Transverse colon (tissue), 4 donors: ENCODE measurements at regions of chr9 and their contacts with region 1.

Region 1: GRCh38 chr9:79507801-79508200 is 64.0 kb upstream of the TLE4 start:
- DNase-seq: no peak
- H3K4me3 ChIP-seq: no peak overlapping the region
- H3K27ac ChIP-seq: no peak overlapping the region
- H3K4me1 ChIP-seq: no peaks in the 10 kb centered on the region
- H3K27me3 ChIP-seq: no peaks in the 10 kb centered on the region
- CTCF ChIP-seq: no peak
- EP300 ChIP-seq: no peak
- POLR2A ChIP-seq: no peak

Region 2: GRCh38 chr9:79264511-79265355 is 243.1 kb before region 1 on chr9:
- in situ Hi-C with region 1: no loop called
- intact Hi-C with region 1: loop called (anchors 5 kb)
- DNase-seq: no peak
- H3K4me3 ChIP-seq: no peak overlapping the region
- H3K27ac ChIP-seq: no peak overlapping the region
- H3K4me1 ChIP-seq: no peaks in the 10 kb centered on the region
- H3K27me3 ChIP-seq: no peaks in the 10 kb centered on the region
- CTCF ChIP-seq: no peak
- EP300 ChIP-seq: no peak
- POLR2A ChIP-seq: no peak

Region 3: GRCh38 chr9:80012557-80013330 is 504.9 kb after region 1 on chr9:
- in situ Hi-C with region 1: no loop called
- intact Hi-C with region 1: no loop called
- DNase-seq: no peak
- H3K4me3 ChIP-seq: no peak overlapping the region
- H3K27ac ChIP-seq: no peak overlapping the region
- H3K4me1 ChIP-seq: no peaks in the 10 kb centered on the region
- H3K27me3 ChIP-seq: no peaks in the 10 kb centered on the region
- CTCF ChIP-seq: no peak
- EP300 ChIP-seq: no peak
- POLR2A ChIP-seq: no peak

Region 4: GRCh38 chr9:80435591-80435990 is 927.8 kb after region 1 on chr9:
- in situ Hi-C with region 1: no loop called
- intact Hi-C with region 1: no loop called
- DNase-seq: no peak
- H3K4me3 ChIP-seq: no peak overlapping the region
- H3K27ac ChIP-seq: no peak overlapping the region
- H3K4me1 ChIP-seq: no peaks in the 10 kb centered on the region
- H3K27me3 ChIP-seq: no peaks in the 10 kb centered on the region
- CTCF ChIP-seq: no peak
- EP300 ChIP-seq: no peak
- POLR2A ChIP-seq: no peak